ENCODE measurements at regions of chr1 and their contacts with region 1.

Region 1: DNA sequence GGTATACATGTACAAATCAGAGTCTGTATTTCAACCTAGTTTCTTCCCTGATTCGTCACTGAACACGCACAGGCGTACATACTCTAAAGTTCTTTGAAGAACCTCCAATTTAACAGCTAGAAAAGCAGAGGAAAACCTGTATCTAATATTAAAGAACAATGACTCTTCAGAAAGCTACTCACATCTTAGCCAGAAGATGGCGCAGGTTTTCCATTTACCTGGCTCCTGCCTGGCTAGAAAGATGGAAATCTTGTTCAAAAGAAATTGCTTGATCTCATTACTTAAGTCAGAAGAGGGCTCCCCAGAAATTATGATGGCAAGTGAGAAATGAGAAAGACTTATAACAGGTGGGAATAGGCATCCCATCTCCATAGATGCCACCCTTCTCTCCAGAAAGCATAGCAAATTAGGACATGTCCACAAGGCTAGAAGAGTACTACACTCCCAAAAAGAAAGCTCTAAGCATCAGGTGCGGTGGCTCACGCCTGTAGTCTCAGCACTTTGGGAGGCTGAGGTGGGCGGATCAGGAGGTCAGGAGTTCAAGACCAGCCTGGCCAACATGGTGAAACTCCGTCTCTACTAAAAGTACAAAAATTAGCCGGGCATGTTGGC is 19.0 kb upstream of the L1TD1 start:
- DNase-seq: peak in 1 of 2 donors; percentile 72
- ATAC-seq: no peak
- H3K4me3 ChIP-seq: no peak overlapping the region
- H3K4me3 Mint-ChIP-seq: no peak overlapping the region
- H3K27ac ChIP-seq: no peak overlapping the region
- H3K27ac Mint-ChIP-seq: no peak overlapping the region
- H3K4me1 ChIP-seq: no peaks in the 10 kb centered on the region
- H3K4me1 Mint-ChIP-seq: no peaks in the 10 kb centered on the region
- H3K27me3 ChIP-seq: no peaks in the 10 kb centered on the region
- H3K27me3 Mint-ChIP-seq: no peaks in the 10 kb centered on the region
- CTCF ChIP-seq: peak; percentile 56

Region 2: DNA sequence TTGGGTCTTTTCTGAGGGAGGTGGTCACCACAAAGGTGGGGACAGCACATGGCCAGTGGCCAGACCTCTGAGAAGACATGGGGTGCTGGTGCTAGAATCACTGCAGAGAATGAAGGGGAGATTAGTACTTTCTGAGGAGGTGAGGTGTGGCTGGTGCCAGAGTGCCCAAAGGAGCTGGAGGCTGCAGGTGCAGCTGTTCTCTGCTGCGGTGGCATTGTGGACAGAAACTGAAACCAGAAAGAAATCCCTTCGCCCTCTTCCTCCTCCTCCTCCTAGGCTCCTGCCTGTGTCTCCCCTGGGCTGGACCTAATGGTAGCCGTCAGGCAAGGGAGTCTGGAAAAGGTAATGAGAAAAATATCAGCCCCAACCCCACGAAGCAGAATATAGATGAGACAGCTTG is 712.5 kb before region 1 on chr1:
- intact Hi-C with region 1: no loop called
- DNase-seq: no peak
- ATAC-seq: no peak
- H3K4me3 ChIP-seq: no peak overlapping the region
- H3K4me3 Mint-ChIP-seq: no peak overlapping the region
- H3K27ac ChIP-seq: no peak overlapping the region
- H3K27ac Mint-ChIP-seq: no peak overlapping the region
- H3K4me1 ChIP-seq: peaks cover 15% of the 10 kb centered on the region
- H3K4me1 Mint-ChIP-seq: peaks cover 16 to 24% of the 10 kb centered on the region in 2 donors
- H3K27me3 ChIP-seq: no peaks in the 10 kb centered on the region
- H3K27me3 Mint-ChIP-seq: peaks cover 0 to 12% of the 10 kb centered on the region in 2 donors
- CTCF ChIP-seq: no peak

Region 3: DNA sequence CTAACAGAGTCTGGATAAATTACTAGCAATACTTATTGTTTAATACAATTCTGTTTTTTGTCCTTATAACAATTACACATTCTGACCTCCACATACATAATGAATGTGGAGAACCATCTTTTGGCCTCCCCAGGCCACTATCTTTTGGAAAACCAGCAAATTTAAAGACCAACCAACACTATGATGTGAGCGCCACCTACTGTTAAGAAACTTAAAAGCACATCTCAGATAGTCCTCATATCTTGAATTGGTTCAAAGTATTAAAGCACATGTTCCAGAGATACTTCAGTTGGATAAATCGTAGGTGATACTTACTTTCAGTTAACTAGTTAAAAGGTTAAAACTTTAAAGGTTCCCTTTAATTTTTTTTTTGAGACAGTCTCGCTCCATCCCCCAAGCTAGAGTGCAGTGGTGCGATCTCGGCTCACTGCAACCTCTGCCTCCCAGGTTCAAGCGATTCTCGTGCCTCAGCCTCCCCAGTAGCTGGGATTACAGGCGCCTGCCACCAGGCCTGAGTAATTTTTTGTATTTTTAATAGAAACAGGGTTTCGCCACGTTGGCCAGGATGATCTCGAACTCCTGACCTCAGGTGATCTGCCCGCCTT is 231.8 kb after region 1 on chr1:
- intact Hi-C with region 1: loop called (anchors 1 kb)
- DNase-seq: peak in 1 of 2 donors; percentile 74
- ATAC-seq: peak in 2 of 3 donors; percentile 44 to 55
- H3K4me3 ChIP-seq: no peak overlapping the region
- H3K4me3 Mint-ChIP-seq: no peak overlapping the region
- H3K27ac ChIP-seq: no peak overlapping the region
- H3K27ac Mint-ChIP-seq: no peak overlapping the region
- H3K4me1 ChIP-seq: no peaks in the 10 kb centered on the region
- H3K4me1 Mint-ChIP-seq: no peaks in the 10 kb centered on the region
- H3K27me3 ChIP-seq: no peaks in the 10 kb centered on the region
- H3K27me3 Mint-ChIP-seq: no peaks in the 10 kb centered on the region
- CTCF ChIP-seq: peak; percentile 87

Measured in natural killer cell (primary cell).